Esophagus muscularis mucosa (tissue), 4 donors: ENCODE measurements at regions of chr17 and their contacts with region 1.

Region 1: DNA sequence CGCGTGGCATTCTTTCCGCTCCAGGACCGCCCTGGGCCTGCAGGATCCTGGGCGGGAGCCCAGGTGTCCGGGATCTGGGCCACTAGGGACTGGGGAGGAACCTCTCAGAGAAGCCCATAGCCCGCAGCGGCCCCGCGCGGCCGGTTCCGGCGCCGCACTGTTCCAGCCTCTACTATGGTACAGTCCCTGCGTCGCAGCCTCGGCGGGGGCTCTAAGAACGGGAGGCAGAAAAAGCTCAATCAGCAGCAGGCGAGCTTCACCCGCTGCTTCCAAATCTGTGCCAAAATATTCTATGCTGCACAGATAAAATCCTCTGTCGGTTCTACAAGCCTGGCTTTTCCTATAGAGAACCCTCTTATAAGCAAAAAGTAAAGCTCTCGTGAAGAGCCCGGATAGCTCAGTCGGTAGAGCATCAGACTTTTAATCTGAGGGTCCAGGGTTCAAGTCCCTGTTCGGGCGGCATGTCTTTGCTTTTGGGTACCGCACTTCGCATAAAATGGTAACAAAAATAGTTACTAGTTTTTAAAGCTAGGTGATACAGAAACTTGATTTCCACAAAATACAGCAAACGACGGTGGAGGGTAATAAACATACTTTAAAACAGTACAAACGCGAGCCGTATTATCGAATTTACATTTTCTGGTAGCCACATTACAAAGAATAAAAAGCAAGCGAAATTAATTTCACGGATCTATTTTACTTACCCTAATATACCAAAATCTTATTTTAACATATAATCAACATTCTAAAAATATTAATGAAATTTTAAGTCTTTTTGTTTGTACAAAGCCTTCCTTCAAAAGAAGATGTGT is 661 bp upstream of the ALOXE3 start:
- DNase-seq: peak; percentile 97
- H3K4me3 ChIP-seq: peak overlapping the region; percentile 55 to 79 (median 59)
- H3K27ac ChIP-seq: peak overlapping the region; percentile 72 to 86 (median 80)
- H3K4me1 ChIP-seq: peaks cover 54 to 62% (median 59%) of the 10 kb centered on the region in 4 donors
- H3K27me3 ChIP-seq: peaks cover 10 to 74% (median 50%) of the 10 kb centered on the region in 4 donors
- CTCF ChIP-seq: peak; percentile 92 to 98 (median 95)
- EP300 ChIP-seq: no peak
- POLR2A ChIP-seq: no peak

Region 2: DNA sequence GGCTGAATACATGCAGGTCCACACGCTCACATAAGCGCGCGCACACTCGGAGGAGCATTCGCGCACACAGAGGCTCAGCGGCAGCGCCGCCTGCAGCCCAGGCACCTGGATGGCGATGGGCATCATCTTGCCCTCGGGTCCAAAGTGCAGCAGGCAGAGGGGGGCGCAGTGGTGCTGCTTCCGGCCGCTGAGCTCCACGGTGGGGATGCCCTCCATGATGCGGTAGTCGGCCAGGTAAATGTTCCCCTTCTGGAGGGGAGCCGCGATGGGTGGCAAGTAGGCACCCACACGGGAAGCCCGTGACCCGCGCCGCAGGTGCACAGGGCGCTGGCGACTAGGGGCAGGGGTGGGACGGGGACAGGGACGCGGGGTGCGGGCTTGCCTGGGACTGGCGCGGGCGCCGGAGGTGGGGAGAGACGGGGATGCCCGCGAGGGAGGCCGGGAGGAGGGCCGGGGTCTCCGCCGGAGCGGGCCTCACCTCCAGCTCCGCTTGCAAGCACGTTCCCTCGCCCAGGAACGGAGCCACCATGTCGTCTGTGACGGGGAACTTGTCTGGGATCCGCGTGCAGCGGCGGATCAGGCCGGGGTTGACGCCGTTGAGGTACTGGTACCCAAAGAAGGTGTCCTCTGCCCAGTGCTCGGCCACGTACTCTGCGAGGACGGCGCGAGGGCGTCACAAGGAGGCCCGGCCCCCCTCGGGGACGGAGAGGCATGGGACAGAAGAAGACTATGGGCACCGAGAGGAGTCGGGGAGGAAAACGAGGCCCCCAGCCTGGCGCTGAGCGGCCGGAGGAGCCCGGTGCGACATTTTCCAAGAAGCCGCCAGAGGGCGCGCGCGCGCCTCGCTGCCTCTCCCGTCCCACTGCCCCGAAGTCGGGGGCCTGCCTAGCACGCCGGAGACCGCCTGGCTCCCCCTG is 39.4 kb before region 1 on chr17:
- intact Hi-C with region 1: loop called (anchors 5 kb)
- DNase-seq: no peak
- H3K4me3 ChIP-seq: peak overlapping the region; percentile 47 to 56 (median 48)
- H3K27ac ChIP-seq: no peak overlapping the region
- H3K4me1 ChIP-seq: peaks cover 12 to 20% (median 17%) of the 10 kb centered on the region in 4 donors
- H3K27me3 ChIP-seq: peaks cover 0 to 98% (median 36%) of the 10 kb centered on the region in 4 donors
- CTCF ChIP-seq: peak in 2 of 3 experiments; percentile 75 to 80
- EP300 ChIP-seq: no peak
- POLR2A ChIP-seq: no peak

Region 3: DNA sequence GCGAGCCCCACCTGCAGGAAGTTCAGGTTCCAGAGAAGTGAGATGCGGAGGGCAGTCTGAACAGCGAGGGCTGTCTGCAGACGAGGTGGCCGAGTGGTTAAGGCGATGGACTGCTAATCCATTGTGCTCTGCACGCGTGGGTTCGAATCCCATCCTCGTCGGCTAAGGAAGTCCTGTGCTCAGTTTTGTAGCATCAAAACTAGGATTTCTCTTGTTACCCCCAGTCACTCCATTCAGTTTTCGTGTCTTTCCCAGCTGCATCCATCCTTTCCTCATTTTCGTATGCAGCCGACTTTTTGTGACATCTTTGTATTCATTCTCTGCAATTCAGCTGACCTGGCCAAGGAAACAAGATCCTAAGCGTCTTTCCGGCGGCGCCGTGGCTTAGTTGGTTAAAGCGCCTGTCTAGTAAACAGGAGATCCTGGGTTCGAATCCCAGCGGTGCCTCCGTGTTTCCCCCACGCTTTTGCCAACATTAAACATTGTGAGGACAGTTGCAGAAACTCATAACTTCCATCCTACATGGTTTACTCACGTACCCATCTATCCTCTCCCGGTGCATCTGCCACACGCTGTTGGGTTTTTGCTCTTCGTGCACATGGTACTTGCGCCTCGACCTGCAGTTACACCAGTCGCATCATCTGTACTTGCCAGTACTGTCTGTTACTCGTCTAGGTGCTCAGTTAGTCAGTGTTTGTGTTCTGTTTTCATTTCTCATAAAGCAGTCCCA is 68.0 kb after region 1 on chr17:
- intact Hi-C with region 1: loop called (anchors 2 kb)
- DNase-seq: peak; percentile 98
- H3K4me3 ChIP-seq: peak overlapping the region; percentile 70 to 90 (median 87)
- H3K27ac ChIP-seq: peak overlapping the region; percentile 93 to 99 (median 96)
- H3K4me1 ChIP-seq: peaks cover 37 to 59% (median 48%) of the 10 kb centered on the region in 4 donors
- H3K27me3 ChIP-seq: no peaks in the 10 kb centered on the region
- CTCF ChIP-seq: peak in 2 of 3 experiments; percentile 19 to 35
- EP300 ChIP-seq: no peak
- POLR2A ChIP-seq: no peak